ENCODE measurements at regions of chr20 and their contacts with region 1.

Region 1: DNA sequence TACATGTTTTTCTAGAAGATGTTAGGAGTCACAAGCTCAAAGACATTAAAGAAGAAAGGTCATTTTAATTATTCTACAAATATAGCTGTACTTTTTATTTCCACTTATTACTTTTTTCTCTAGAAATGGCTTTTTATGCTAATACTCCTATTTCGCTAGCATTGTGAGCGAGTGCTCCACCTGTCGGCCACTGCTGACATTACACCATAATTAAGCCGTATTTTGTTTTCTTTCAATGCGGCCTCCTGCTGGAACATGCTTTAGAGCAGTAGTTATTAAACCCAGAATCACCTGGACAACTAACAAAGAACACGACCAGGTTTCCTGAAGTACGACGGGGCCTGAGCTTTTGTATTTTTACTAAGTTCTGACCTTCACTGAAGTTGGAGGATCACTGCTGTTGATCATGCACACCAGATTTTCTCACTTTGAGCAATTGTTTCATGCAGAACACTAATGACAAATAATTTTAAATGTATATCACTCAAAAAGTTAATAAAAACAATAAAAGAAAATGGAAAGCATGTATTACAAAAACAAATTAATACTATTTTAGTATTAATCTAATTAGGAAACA is 74.1 kb upstream of the PAK5 start:
- DNase-seq: peak in 1 of 2 experiments; percentile 72
- H3K4me3 ChIP-seq: no peak overlapping the region
- H3K27ac ChIP-seq: no peak overlapping the region
- H3K4me1 ChIP-seq: no peaks in the 10 kb centered on the region
- H3K27me3 ChIP-seq: no peaks in the 10 kb centered on the region
- CTCF ChIP-seq: peak in 2 of 3 experiments; percentile 70 to 74; a peak in 3 of 4 replicates
- EP300 ChIP-seq: no peak
- POLR2A ChIP-seq: no peak
- RAD21 ChIP-seq: peak; percentile 60 to 62

Region 2: DNA sequence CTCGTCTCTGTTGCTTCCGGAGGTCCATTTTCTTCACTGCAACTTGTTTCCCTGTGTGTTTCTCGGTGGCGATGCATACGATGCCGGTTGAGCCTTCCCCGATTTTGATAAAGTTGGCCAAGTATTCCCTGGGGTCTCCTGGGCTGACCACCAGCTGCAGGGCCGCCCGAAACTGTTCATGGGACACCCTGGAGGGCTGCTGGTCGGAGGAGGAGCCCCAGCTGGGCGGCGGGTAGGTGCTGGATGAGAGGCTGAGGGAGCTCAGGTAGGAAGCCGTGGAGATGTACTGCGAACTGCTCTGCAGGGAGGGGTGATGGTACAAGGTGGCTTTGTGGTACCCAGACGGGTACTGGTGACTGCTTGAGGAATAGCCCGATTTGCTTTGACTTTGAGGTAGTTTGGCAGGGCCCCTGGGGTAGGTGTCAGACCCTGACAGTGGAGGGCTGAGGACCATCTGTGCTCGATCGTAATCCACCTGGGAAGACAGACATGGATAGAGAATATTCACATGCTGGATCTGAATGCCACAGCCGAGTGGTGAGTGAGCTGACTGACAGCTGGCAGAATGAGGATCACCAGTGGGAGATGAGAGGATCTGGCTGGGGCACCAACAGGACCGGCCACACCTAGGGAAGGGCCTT is 346.9 kb before region 1 on chr20:
- CTCF ChIA-PET with region 1: no interaction called
- POLR2A ChIA-PET with region 1: no interaction called
- DNase-seq: no peak
- H3K4me3 ChIP-seq: no peak overlapping the region
- H3K27ac ChIP-seq: no peak overlapping the region
- H3K4me1 ChIP-seq: peaks cover 0 to 7% (median 2%) of the 10 kb centered on the region in 4 experiments; a peak in 5 of 7 replicates
- H3K27me3 ChIP-seq: peaks cover 0 to 4% (median 2%) of the 10 kb centered on the region in 4 experiments; a peak in 4 of 7 replicates
- CTCF ChIP-seq: no peak
- EP300 ChIP-seq: no peak
- POLR2A ChIP-seq: no peak
- RAD21 ChIP-seq: no peak

Region 3: GRCh38 chr20:9927224-9927623 is 14.3 kb after region 1 on chr20:
- CTCF ChIA-PET with region 1: interaction called, 17 read pairs
- POLR2A ChIA-PET with region 1: no interaction called
- DNase-seq: no peak
- H3K4me3 ChIP-seq: no peak overlapping the region
- H3K27ac ChIP-seq: no peak overlapping the region
- H3K4me1 ChIP-seq: no peaks in the 10 kb centered on the region
- H3K27me3 ChIP-seq: no peaks in the 10 kb centered on the region
- CTCF ChIP-seq: no peak
- EP300 ChIP-seq: no peak
- POLR2A ChIP-seq: no peak
- RAD21 ChIP-seq: no peak